K562 (cell line): ENCODE measurements at regions of chr13 and their contacts with region 1.

Region 1: DNA sequence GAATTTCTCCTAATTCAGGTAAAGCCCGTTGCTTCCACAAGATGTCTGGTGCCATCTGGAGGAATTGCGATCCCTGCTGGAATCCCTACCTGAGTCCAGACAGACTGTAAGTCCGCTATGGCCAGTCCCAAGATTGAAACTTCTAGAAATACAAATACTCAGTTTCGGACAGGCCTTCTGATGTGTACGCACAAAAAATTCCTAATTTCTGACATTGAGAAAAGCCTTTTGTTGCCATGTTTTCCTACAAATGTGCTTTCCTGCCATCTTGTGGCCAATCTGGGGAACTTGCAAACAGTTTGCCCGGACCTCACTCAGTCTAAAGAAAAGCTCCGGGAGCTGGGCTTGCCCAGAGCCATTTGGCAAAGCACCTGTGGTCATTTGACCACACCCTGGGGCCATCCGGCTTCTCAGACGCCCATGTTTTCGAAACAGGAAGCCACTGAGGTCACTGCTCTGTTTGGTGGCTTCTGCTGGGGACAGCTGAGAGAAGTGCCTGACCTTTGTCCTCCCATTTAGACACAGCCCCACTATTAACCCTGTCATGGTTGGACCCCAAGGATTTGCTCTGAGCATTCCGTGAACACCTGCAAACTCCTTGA is 79.4 kb downstream of the SLC15A1 start:
- DNase-seq: peak; percentile 53 to 55 (median 54)
- ATAC-seq: peak; percentile 91
- H3K4me3 ChIP-seq: no peak overlapping the region
- H3K27ac ChIP-seq: no peak overlapping the region
- H3K4me1 ChIP-seq: no peaks in the 10 kb centered on the region
- H3K27me3 ChIP-seq: peaks cover 2 to 29% of the 10 kb centered on the region in 2 experiments; a peak in 4 of 5 replicates
- CTCF ChIP-seq: peak; percentile 58 to 80 (median 73)
- EP300 ChIP-seq: no peak
- POLR2A ChIP-seq: no peak
- RAD21 ChIP-seq: peak; percentile 63 to 78

Region 2: DNA sequence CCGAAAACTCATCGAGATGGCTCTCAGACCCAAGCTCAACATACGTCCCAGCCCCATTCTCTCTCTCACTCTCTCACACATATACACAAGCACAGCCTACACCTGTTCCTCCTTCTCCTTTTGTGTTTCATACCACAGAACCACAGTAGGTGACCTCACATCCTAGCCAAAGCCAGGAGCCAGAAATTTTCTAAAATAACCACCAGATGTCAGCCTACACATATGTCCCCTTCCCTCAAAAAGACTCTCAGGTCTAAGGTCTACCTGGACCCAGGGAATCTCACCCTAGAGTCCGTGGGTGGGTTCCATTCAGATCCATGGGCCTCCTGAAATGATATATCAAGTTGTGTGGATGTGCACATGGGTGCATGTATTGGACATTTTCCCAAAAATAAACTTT is 823.7 kb before region 1 on chr13:
- CTCF ChIA-PET with region 1: no interaction called
- POLR2A ChIA-PET with region 1: no interaction called
- in situ Hi-C with region 1: loop called (anchors 10 kb)
- intact Hi-C with region 1: loop called (anchors 5 kb)
- DNase-seq: peak in 3 of 4 experiments; percentile 8 to 17 (median 16)
- ATAC-seq: peak; percentile 70
- H3K4me3 ChIP-seq: no peak overlapping the region
- H3K27ac ChIP-seq: no peak overlapping the region
- H3K4me1 ChIP-seq: no peaks in the 10 kb centered on the region
- H3K27me3 ChIP-seq: no peaks in the 10 kb centered on the region
- CTCF ChIP-seq: peak; percentile 24 to 52 (median 41); a peak in 3 of 6 replicates
- EP300 ChIP-seq: no peak
- POLR2A ChIP-seq: no peak
- RAD21 ChIP-seq: peak; percentile 32 to 43; a peak in 3 of 4 replicates

Region 3: GRCh38 chr13:97855570-97856303 is 817.3 kb before region 1 on chr13:
- CTCF ChIA-PET with region 1: no interaction called
- POLR2A ChIA-PET with region 1: no interaction called
- in situ Hi-C with region 1: loop called (anchors 10 kb)
- intact Hi-C with region 1: no loop called
- DNase-seq: peak; percentile 39 to 63 (median 56)
- ATAC-seq: peak; percentile 89
- H3K4me3 ChIP-seq: no peak overlapping the region
- H3K27ac ChIP-seq: no peak overlapping the region
- H3K4me1 ChIP-seq: no peaks in the 10 kb centered on the region
- H3K27me3 ChIP-seq: peaks cover 0 to 14% of the 10 kb centered on the region in 2 experiments; a peak in 2 of 5 replicates
- CTCF ChIP-seq: peak; percentile 59 to 79 (median 67)
- EP300 ChIP-seq: no peak
- POLR2A ChIP-seq: no peak
- RAD21 ChIP-seq: peak; percentile 64 to 81

Region 4: GRCh38 chr13:98033277-98034247 is 639.5 kb before region 1 on chr13:
- CTCF ChIA-PET with region 1: no interaction called
- POLR2A ChIA-PET with region 1: no interaction called
- in situ Hi-C with region 1: no loop called
- intact Hi-C with region 1: loop called (anchors 10 kb)
- DNase-seq: peak in 2 of 4 experiments; percentile 11 to 23
- ATAC-seq: peak; percentile 54
- H3K4me3 ChIP-seq: no peak overlapping the region
- H3K27ac ChIP-seq: no peak overlapping the region
- H3K4me1 ChIP-seq: no peaks in the 10 kb centered on the region
- H3K27me3 ChIP-seq: peaks cover 0 to 22% of the 10 kb centered on the region in 2 experiments; a peak in 4 of 5 replicates
- CTCF ChIP-seq: peak; percentile 12 to 49 (median 34); a peak in 2 of 6 replicates
- EP300 ChIP-seq: no peak
- POLR2A ChIP-seq: no peak
- RAD21 ChIP-seq: 0 out of 4 replicates have a peak, but pooled peaks of 1 of the 2 experiments have one; percentile 18

Region 5: GRCh38 chr13:98189841-98190505 is 483.1 kb before region 1 on chr13:
- CTCF ChIA-PET with region 1: no interaction called
- POLR2A ChIA-PET with region 1: no interaction called
- in situ Hi-C with region 1: no loop called
- intact Hi-C with region 1: no loop called
- DNase-seq: no peak
- ATAC-seq: no peak
- H3K4me3 ChIP-seq: no peak overlapping the region
- H3K27ac ChIP-seq: no peak overlapping the region
- H3K4me1 ChIP-seq: no peaks in the 10 kb centered on the region
- H3K27me3 ChIP-seq: peaks cover 0 to 5% of the 10 kb centered on the region in 2 experiments; a peak in 2 of 5 replicates
- CTCF ChIP-seq: no peak
- EP300 ChIP-seq: no peak
- POLR2A ChIP-seq: no peak
- RAD21 ChIP-seq: no peak

Region 6: GRCh38 chr13:98445340-98446233 is 227.5 kb before region 1 on chr13:
- CTCF ChIA-PET with region 1: interaction called, 11 read pairs
- POLR2A ChIA-PET with region 1: no interaction called
- in situ Hi-C with region 1: no loop called
- intact Hi-C with region 1: loop called (anchors 1 kb)
- DNase-seq: peak; percentile 71 to 84 (median 80)
- ATAC-seq: peak; percentile 96
- H3K4me3 ChIP-seq: no peak overlapping the region
- H3K27ac ChIP-seq: no peak overlapping the region
- H3K4me1 ChIP-seq: peaks cover 0 to 11% of the 10 kb centered on the region in 2 experiments; a peak in 2 of 5 replicates
- H3K27me3 ChIP-seq: peaks cover 6 to 38% of the 10 kb centered on the region in 2 experiments
- CTCF ChIP-seq: peak; percentile 83 to 84 (median 84)
- EP300 ChIP-seq: no peak
- POLR2A ChIP-seq: no peak
- RAD21 ChIP-seq: peak; percentile 71 to 86

Region 7: GRCh38 chr13:98842864-98843481 is 169.9 kb after region 1 on chr13:
- CTCF ChIA-PET with region 1: no interaction called
- POLR2A ChIA-PET with region 1: interaction called, 7 read pairs
- in situ Hi-C with region 1: no loop called
- intact Hi-C with region 1: loop called (anchors 5 kb)
- DNase-seq: peak; percentile 48 to 71 (median 56)
- ATAC-seq: peak; percentile 90
- H3K4me3 ChIP-seq: no peak overlapping the region
- H3K27ac ChIP-seq: no peak overlapping the region
- H3K4me1 ChIP-seq: peaks cover 0 to 4% of the 10 kb centered on the region in 2 experiments; a peak in 1 of 5 replicates
- H3K27me3 ChIP-seq: no peaks in the 10 kb centered on the region
- CTCF ChIP-seq: peak; percentile 67 to 82 (median 77)
- EP300 ChIP-seq: no peak
- POLR2A ChIP-seq: no peak
- RAD21 ChIP-seq: peak; percentile 57 to 64